Activated CD8-positive, alpha-beta T cell treated with anti-CD3 and anti-CD28 coated beads for 36 hours (primary cell): ENCODE measurements at regions of chr3 and their contacts with region 1.

Region 1: DNA sequence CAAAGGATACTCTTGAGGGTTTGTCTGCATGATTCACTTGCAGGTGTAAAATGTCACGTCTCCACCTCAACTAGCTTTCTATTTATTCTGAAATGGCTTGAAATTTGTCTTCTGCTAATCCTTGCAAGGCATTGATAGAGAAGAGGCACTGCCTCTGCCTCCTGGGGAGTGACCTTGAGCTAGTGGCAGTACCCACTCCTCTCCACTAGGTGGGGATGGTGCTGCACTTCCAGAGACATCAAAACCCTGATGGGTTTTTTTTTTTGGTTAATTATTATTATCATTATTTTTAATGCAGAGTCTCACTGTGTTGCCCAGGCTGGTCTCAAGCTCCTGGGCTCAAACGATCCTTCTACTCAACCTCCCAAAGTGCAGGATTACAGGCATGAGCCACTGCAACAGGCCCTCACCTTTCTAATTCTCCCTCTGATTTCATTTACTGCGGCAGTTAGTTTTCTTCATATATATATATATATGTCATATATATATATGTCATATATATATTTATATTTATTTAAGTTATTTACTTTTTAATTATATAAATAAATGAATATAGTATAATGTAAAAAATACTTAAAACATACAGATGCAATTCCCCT is 117.6 kb upstream of the EIF1B start:
- DNase-seq: peak; percentile 73
- ATAC-seq: peak; percentile 92
- H3K4me3 Mint-ChIP-seq: no peak overlapping the region
- H3K27ac Mint-ChIP-seq: no peak overlapping the region
- H3K4me1 Mint-ChIP-seq: no peaks in the 10 kb centered on the region
- H3K27me3 Mint-ChIP-seq: no peaks in the 10 kb centered on the region
- CTCF ChIP-seq: peak; percentile 95

Region 2: GRCh38 chr3:40179016-40179415 is 12.9 kb before region 1 on chr3:
- CTCF ChIA-PET with region 1: interaction called, 21 read pairs
- POLR2A ChIA-PET with region 1: no interaction called
- intact Hi-C with region 1: no loop called
- DNase-seq: peak; percentile 83
- ATAC-seq: peak; percentile 61
- H3K4me3 Mint-ChIP-seq: no peak overlapping the region
- H3K27ac Mint-ChIP-seq: no peak overlapping the region
- H3K4me1 Mint-ChIP-seq: no peaks in the 10 kb centered on the region
- H3K27me3 Mint-ChIP-seq: no peaks in the 10 kb centered on the region
- CTCF ChIP-seq: peak; percentile 67

Region 3: DNA sequence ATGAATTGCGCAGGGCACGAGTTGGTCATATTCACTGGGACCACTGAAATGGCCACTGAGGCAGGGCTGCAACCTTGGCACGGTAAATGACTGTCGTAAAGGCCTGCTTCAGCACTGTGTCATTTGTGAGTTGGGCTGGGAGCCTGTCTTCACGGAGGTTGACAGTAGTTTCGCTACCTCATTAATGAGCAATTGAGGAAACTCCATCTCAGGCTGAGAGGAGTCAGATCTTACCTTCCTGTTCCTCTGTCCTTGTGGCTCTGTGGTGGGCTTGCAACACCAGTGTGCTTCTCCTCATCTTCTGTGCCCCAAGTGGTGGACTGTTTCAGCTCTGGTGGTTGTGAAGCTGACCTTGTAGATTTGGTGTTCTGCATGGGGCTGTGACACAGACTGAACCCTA is 37.4 kb after region 1 on chr3:
- CTCF ChIA-PET with region 1: no interaction called
- POLR2A ChIA-PET with region 1: no interaction called
- intact Hi-C with region 1: no loop called
- DNase-seq: no peak
- ATAC-seq: no peak
- H3K4me3 Mint-ChIP-seq: no peak overlapping the region
- H3K27ac Mint-ChIP-seq: no peak overlapping the region
- H3K4me1 Mint-ChIP-seq: no peaks in the 10 kb centered on the region
- H3K27me3 Mint-ChIP-seq: no peaks in the 10 kb centered on the region
- CTCF ChIP-seq: no peak

Region 4: DNA sequence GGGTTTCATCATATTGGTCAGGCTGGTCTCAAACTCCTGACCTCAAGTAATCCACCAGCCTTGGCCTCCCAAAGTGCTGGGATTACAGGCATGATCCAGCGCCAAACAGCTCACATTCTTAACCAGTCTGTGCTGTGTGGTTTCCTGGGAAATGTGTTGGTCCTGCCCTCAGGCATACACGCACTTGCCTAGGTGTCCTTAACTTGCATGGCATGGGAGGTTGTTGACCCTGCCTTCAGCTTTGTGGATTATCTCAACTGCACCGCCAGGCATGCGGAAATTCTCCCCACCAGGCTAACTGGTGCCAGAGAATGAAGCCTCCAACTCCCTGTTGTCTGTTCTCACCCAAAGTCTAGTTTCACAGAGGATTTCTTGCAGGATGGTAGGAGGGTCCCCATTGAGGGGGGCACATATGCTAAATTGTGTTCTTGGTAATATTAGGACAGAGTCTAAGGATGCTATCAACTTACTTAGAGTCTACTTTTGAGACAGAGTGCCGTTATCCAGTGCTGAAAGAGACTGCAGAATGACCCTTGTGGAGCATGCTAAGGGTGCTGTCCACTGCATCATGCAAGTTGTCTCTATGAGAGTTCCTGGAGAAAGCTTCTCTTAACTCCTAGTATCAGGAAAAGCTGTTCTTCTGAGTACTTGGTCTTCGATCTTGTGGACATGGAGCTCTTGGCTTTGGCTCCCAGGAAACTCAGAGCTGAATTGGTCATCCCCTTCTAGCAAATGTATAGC is 55.9 kb after region 1 on chr3:
- CTCF ChIA-PET with region 1: no interaction called
- POLR2A ChIA-PET with region 1: no interaction called
- intact Hi-C with region 1: no loop called
- DNase-seq: no peak
- ATAC-seq: no peak
- H3K4me3 Mint-ChIP-seq: no peak overlapping the region
- H3K27ac Mint-ChIP-seq: no peak overlapping the region
- H3K4me1 Mint-ChIP-seq: no peaks in the 10 kb centered on the region
- H3K27me3 Mint-ChIP-seq: no peaks in the 10 kb centered on the region
- CTCF ChIP-seq: no peak

Region 5: GRCh38 chr3:40294434-40294833 is 102.5 kb after region 1 on chr3:
- CTCF ChIA-PET with region 1: interaction called, 11 read pairs
- POLR2A ChIA-PET with region 1: no interaction called
- intact Hi-C with region 1: no loop called
- DNase-seq: no peak
- ATAC-seq: no peak
- H3K4me3 Mint-ChIP-seq: no peak overlapping the region
- H3K27ac Mint-ChIP-seq: no peak overlapping the region
- H3K4me1 Mint-ChIP-seq: peaks cover 2% of the 10 kb centered on the region
- H3K27me3 Mint-ChIP-seq: no peaks in the 10 kb centered on the region
- CTCF ChIP-seq: no peak

Region 6: GRCh38 chr3:40309418-40309924 is 117.5 kb after region 1 on chr3 and contains the start of gene EIF1B:
- CTCF ChIA-PET with region 1: interaction called, 143 read pairs
- POLR2A ChIA-PET with region 1: interaction called, 6 read pairs
- intact Hi-C with region 1: no loop called
- DNase-seq: peak; percentile 99
- ATAC-seq: peak; percentile 88
- H3K4me3 Mint-ChIP-seq: peak within 1 kb of the TSS; percentile 98
- H3K27ac Mint-ChIP-seq: peak within 1 kb of the TSS; percentile 97
- H3K4me1 Mint-ChIP-seq: peaks cover 24% of the 10 kb centered on the region
- H3K27me3 Mint-ChIP-seq: no peaks in the 10 kb centered on the region
- CTCF ChIP-seq: peak; percentile 73
- total RNA-seq, gene EIF1B: 38.2 to 42.3 TPM